ENCODE measurements at regions of chr12 and their contacts with region 1.

Region 1: GRCh38 chr12:27462151-27462694 is 15.7 kb downstream of the SMCO2 start:
- DNase-seq: peak; percentile 97
- H3K4me3 ChIP-seq: peak overlapping the region in 1 of 3 experiments; percentile 33
- H3K27ac ChIP-seq: peak overlapping the region; percentile 88
- H3K4me1 ChIP-seq: peaks cover 40% of the 10 kb centered on the region
- H3K27me3 ChIP-seq: no peaks in the 10 kb centered on the region
- CTCF ChIP-seq: no peak
- POLR2A ChIP-seq: peak; percentile 29

Region 2: DNA sequence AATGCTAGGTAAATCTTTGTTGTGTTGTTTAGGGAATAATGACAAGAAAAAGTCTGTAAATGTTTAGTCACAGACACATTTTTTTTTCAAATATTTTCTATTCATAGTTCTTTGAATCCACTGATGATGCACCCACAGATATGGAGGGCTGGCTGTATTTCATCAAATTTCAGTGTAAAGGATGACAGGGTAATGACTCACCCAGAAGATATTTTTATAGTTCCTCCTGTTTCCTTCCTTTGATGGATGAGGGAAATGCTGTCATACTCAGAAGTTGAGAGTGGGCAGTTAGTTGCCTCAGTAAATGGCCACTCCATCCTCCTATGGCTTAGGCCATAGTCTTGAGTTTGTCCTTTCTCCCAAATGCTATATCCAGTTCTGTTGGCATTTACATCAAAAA is 157.1 kb after region 1 on chr12:
- CTCF ChIA-PET with region 1: no interaction called
- POLR2A ChIA-PET with region 1: no interaction called
- dilution Hi-C with region 1: no loop called
- intact Hi-C with region 1: loop called (anchors 5 kb)
- DNase-seq: peak; percentile 87
- H3K4me3 ChIP-seq: no peak overlapping the region
- H3K27ac ChIP-seq: peak overlapping the region; percentile 71
- H3K4me1 ChIP-seq: peaks cover 76% of the 10 kb centered on the region
- H3K27me3 ChIP-seq: no peaks in the 10 kb centered on the region
- CTCF ChIP-seq: no peak
- POLR2A ChIP-seq: peak; percentile 51

Region 3: DNA sequence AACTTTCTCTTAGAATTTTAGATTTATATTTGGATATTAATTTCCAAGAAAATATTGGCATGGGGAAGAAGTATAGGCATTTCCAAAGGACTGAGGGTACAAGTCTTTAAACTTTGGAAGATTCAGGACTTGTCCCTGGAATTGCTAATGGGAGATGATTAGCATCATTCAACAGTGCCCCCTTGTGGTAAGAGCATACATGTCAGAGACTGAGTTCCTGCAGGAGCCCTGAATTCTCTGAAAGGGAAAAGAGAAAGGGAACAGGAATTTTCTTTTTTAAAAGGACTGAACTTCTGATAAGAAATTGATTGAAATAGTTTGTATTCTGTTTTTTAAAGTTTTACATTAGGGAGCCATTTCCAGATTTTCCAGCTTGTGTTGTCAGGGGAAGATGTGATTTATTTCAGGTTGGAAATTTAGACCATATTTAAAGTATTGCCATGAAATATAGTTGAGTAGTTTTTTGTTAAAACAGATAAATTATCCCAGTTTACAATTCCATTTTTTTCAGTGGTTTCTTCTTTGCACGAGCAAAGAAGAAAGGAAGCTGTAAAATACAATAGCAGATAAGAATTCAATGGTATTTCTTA is 190.0 kb after region 1 on chr12:
- CTCF ChIA-PET with region 1: no interaction called
- POLR2A ChIA-PET with region 1: no interaction called
- dilution Hi-C with region 1: no loop called
- intact Hi-C with region 1: loop called (anchors 1 kb)
- DNase-seq: peak; percentile 86
- H3K4me3 ChIP-seq: no peak overlapping the region
- H3K27ac ChIP-seq: no peak overlapping the region
- H3K4me1 ChIP-seq: peaks cover 8% of the 10 kb centered on the region
- H3K27me3 ChIP-seq: no peaks in the 10 kb centered on the region
- CTCF ChIP-seq: peak; percentile 67 to 69
- POLR2A ChIP-seq: no peak

Measured in endothelial cell of umbilical vein (primary cell).